Activated B cell treated with CpG ODN at 0.5 μM for 24 hours (primary cell): ENCODE measurements at regions of chr1 and their contacts with region 1.

Region 1: GRCh38 chr1:31072304-31072746 is 6.8 kb upstream of the PUM1 start:
- DNase-seq: no peak
- ATAC-seq: peak; percentile 37
- H3K4me3 Mint-ChIP-seq: no peak overlapping the region
- H3K27ac Mint-ChIP-seq: no peak overlapping the region
- H3K4me1 Mint-ChIP-seq: no peaks in the 10 kb centered on the region
- H3K27me3 Mint-ChIP-seq: no peaks in the 10 kb centered on the region
- CTCF ChIP-seq: no peak

Region 2: DNA sequence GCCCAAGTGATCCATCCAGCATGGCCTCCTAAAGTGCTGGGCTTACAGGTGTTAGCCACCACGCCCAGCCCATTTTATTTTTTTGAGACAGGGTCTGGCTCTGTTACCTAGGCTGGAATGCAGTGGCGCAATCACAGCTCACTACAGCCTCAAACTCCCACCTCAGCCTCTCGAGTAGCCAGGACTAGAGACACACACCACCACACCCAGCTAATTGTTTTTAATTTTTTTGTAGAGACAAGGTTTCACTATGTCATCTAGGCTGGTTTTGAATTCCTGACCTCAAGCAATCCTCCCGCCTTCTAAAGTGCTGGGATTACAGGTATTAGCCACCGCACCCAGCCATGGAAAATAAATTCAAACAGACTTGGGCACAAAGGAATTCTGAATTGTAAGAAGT is 38.7 kb before region 1 on chr1:
- CTCF ChIA-PET with region 1: no interaction called
- POLR2A ChIA-PET with region 1: interaction called, 11 read pairs
- intact Hi-C with region 1: loop called (anchors 5 kb)
- DNase-seq: no peak
- ATAC-seq: no peak
- H3K4me3 Mint-ChIP-seq: no peak overlapping the region
- H3K27ac Mint-ChIP-seq: no peak overlapping the region
- H3K4me1 Mint-ChIP-seq: peaks cover 78% of the 10 kb centered on the region
- H3K27me3 Mint-ChIP-seq: no peaks in the 10 kb centered on the region
- CTCF ChIP-seq: no peak